HAP-1 (cell line): ENCODE measurements at regions of chr7 and their contacts with region 1.

Region 1: DNA sequence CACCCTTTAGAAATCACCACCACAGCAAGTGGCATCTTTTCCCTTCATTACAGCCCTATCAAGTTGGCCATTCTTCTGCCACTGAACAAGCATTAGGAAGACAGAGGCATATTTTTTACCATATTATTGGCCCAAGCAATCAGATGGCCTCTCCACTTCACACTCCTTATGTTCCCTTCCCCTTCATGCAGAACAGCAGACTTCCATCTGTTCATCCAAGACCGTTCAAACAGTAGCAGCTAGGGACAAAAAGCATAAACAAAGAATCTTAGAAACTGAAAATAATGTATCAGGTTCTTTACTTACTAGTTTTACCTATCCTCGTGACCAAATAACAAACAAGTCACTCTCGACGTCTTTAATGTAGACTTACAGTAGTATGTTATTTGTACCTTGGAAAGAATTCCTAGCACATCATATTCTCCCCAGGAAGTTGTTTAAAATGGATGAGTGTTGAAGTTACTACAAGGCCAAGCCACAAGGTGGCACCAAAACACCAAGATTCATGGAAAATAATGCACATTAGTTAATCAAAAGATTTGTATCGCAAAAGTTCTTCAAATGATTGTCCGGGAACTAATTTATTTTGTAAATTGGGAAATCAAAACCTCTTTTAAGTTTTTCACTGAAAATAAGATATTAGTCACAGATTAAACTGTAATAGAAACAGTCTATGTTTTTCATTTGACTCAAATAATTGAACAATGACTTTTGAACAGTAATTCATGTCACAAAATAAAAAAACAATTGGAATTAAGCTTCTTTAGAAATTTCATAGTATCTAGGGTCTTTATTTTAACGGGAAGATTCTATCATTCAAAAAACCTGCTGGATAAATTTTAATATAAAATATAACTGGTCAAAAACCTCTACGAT is 112.1 kb downstream of the VPS41 start:
- DNase-seq: peak; percentile 65 to 76
- H3K4me3 ChIP-seq: no peak overlapping the region
- H3K4me1 ChIP-seq: no peaks in the 10 kb centered on the region; the same call in 1 of the 2 replicates
- H3K27me3 ChIP-seq: no peaks in the 10 kb centered on the region

Region 2: DNA sequence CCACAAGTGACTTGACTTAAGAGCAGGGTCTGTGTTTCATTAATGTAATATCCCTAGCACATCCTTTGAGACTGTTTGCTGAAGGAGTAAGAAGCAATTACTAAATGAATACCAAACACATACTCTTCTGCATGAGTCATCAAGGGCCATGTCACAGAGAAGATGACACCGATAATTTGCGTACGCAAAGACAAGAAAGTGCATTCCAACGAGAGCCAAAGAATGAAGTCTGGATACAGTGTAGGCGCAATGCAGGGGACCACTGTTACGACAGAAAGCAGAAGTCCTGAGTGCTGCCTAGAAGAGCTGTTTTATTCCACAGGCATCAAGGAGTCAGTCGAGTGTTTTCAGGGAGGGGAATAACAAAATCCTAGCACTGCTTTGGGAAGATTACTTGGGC is 49.4 kb after region 1 on chr7:
- in situ Hi-C with region 1: no loop called
- DNase-seq: peak; percentile 21 to 44
- H3K4me3 ChIP-seq: no peak overlapping the region
- H3K4me1 ChIP-seq: peaks cover 16% of the 10 kb centered on the region
- H3K27me3 ChIP-seq: no peaks in the 10 kb centered on the region

Region 3: DNA sequence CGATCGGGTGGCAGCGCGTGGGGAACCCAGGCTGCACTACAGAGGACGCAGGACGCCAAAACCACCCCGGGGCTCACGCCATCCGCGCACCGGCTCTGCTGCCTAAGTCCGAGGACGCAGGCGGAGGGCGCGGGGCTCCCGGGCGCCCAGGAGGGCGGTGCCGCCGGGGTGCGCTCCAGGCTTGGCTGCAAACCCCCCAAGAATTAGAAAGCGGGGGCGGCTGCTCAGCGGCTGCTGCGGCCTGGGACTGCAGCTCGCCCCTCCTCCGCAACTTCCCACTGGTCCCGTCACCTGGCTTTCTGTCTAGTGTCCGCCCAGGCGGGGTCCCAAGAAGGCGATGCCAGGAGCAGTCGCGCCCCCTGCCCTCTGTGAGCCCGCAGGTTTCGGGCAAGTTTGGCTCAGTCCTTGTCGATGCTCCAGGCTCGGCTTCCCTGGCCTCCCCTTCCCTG is 179.1 kb after region 1 on chr7:
- in situ Hi-C with region 1: no loop called
- DNase-seq: no peak
- H3K4me3 ChIP-seq: no peak overlapping the region
- H3K4me1 ChIP-seq: no peaks in the 10 kb centered on the region
- H3K27me3 ChIP-seq: no peaks in the 10 kb centered on the region

Region 4: DNA sequence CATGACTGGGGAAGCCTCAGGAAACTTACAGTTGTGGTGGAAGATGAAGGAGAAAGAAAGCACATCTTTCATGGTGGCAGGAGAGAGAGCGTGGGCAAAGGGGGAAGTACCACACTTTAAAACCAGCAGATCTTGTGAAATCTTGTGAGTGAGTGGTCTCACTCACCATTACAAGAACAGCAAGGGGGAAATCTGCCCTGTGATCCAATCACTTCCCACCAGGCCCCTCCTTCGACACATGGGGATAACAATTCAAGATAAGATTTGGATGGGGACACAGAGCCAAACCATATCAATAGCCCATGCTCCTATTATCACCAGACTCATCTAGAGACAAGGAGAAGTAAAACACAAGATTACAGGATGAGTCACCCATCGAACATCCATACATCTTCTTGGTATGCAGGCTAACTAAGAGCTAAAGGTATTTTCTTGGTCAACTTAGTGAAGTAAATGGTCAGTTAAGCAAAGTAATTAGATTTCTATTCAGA is 714.0 kb after region 1 on chr7:
- in situ Hi-C with region 1: loop called (anchors 10 kb)
- DNase-seq: no peak
- H3K4me3 ChIP-seq: no peak overlapping the region
- H3K4me1 ChIP-seq: no peaks in the 10 kb centered on the region
- H3K27me3 ChIP-seq: no peaks in the 10 kb centered on the region